H1 (cell line): ENCODE measurements at regions of chr10 and their contacts with region 1.

Region 1: GRCh38 chr10:93515071-93516005 is 18.9 kb downstream of the CEP55 start:
- DNase-seq: no peak
- H3K4me3 ChIP-seq: no peak overlapping the region
- H3K27ac ChIP-seq: no peak overlapping the region
- H3K4me1 ChIP-seq: no peaks in the 10 kb centered on the region; a peak in 1 of 7 replicates
- H3K27me3 ChIP-seq: no peaks in the 10 kb centered on the region
- CTCF ChIP-seq: no peak
- EP300 ChIP-seq: no peak
- POLR2A ChIP-seq: no peak
- RAD21 ChIP-seq: no peak

Region 2: DNA sequence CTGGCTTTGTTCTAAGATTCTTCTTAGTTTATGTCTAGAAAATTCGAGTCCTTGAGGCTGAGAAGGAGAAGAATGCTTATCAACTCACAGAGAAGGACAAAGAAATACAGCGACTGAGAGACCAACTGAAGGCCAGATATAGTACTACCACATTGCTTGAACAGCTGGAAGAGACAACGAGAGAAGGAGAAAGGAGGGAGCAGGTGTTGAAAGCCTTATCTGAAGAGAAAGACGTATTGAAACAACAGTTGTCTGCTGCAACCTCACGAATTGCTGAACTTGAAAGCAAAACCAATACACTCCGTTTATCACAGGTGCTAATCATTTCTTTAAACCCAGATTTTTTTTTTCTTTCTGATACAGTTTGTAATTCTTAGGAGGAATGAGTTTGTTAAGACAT is 12.3 kb before region 1 on chr10:
- CTCF ChIA-PET with region 1: interaction called, 29 read pairs
- POLR2A ChIA-PET with region 1: no interaction called
- DNase-seq: no peak
- H3K4me3 ChIP-seq: no peak overlapping the region
- H3K27ac ChIP-seq: no peak overlapping the region
- H3K4me1 ChIP-seq: no peaks in the 10 kb centered on the region
- H3K27me3 ChIP-seq: no peaks in the 10 kb centered on the region
- CTCF ChIP-seq: no peak
- EP300 ChIP-seq: no peak
- POLR2A ChIP-seq: no peak
- RAD21 ChIP-seq: no peak

Region 3: GRCh38 chr10:93535293-93535692 is 20.0 kb after region 1 on chr10:
- CTCF ChIA-PET with region 1: interaction called, 19 read pairs
- POLR2A ChIA-PET with region 1: no interaction called
- DNase-seq: peak in 1 of 2 experiments; percentile 50
- H3K4me3 ChIP-seq: no peak overlapping the region
- H3K27ac ChIP-seq: no peak overlapping the region
- H3K4me1 ChIP-seq: 0 out of 7 replicates have a peak, but pooled peaks cover 0 to 3% (median 0%) of the 10 kb centered on the region in 4 experiments
- H3K27me3 ChIP-seq: no peaks in the 10 kb centered on the region
- CTCF ChIP-seq: peak; percentile 27 to 71 (median 62)
- EP300 ChIP-seq: no peak
- POLR2A ChIP-seq: no peak
- RAD21 ChIP-seq: peak; percentile 18 to 36; a peak in 3 of 4 replicates